ENCODE measurements at regions of chr1 and their contacts with region 1.

Region 1: GRCh38 chr1:15949453-15950245 is 26.3 kb downstream of the ZBTB17 start:
- DNase-seq: peak; percentile 87 to 94
- H3K4me3 ChIP-seq: peak overlapping the region; percentile 12 to 49 (median 34)
- H3K27ac ChIP-seq: peak overlapping the region; percentile 87 to 95
- H3K4me1 ChIP-seq: peaks cover 19% of the 10 kb centered on the region in 2 donors
- H3K27me3 ChIP-seq: no peaks in the 10 kb centered on the region
- CTCF ChIP-seq: peak in 1 of 3 donors; percentile 9
- POLR2A ChIP-seq: no peak

Region 2: GRCh38 chr1:14238472-14239307 is 1711.0 kb before region 1 on chr1:
- intact Hi-C with region 1: loop called (anchors 10 kb)
- DNase-seq: no peak
- H3K4me3 ChIP-seq: no peak overlapping the region
- H3K27ac ChIP-seq: peak overlapping the region in 1 of 2 donors; percentile 38
- H3K4me1 ChIP-seq: no peaks in the 10 kb centered on the region
- H3K27me3 ChIP-seq: no peaks in the 10 kb centered on the region
- CTCF ChIP-seq: no peak
- POLR2A ChIP-seq: no peak

Region 3: DNA sequence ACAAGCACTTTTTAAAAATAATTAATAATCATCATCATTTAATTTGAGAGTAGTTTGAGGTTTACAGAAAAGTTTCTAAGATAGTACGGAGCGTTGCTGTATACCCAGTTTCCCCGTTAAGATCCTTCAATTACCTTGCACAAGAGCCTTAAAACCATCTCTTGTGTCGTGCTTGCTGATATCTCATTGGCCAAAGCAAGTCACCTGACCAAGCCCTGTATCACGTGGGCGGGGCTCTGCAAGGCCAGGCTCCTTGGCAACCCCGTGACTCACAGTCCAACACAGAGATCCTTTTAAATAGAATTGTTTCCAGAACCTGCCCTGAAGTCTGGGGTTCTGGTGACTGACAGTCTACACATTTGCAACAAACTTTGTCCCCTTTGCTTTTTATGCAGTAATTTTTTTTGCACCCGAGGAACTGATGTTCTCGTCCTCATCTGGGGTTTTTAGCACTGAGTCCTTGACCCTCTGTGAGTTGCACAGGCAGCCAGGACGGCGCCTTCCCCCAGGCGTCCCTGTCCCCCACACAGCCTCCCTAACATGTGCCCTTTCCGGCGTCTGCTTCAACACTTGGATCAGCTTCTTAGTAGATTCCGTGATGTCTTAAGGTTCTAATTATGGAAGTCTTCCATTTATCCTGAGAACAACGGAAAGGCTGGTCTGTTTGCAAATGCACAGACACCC is 979.4 kb before region 1 on chr1:
- intact Hi-C with region 1: loop called (anchors 10 kb)
- DNase-seq: peak in 1 of 2 donors; percentile 73
- H3K4me3 ChIP-seq: peak overlapping the region in 1 of 3 donors; percentile 6
- H3K27ac ChIP-seq: peak overlapping the region; percentile 89 to 94
- H3K4me1 ChIP-seq: peaks cover 17 to 24% of the 10 kb centered on the region in 2 donors
- H3K27me3 ChIP-seq: no peaks in the 10 kb centered on the region
- CTCF ChIP-seq: no peak
- POLR2A ChIP-seq: no peak